Ovary (tissue), 10 donors: ENCODE measurements at regions of chr11 and their contacts with region 1.

Region 1: GRCh38 chr11:63621931-63622782 is 7.9 kb upstream of the PLAAT3 start:
- DNase-seq: peak in 1 of 5 donors; percentile 16
- H3K4me3 ChIP-seq: no peak overlapping the region
- H3K27ac ChIP-seq: no peak overlapping the region
- H3K4me1 ChIP-seq: peaks cover 18% of the 10 kb centered on the region
- H3K27me3 ChIP-seq: no peaks in the 10 kb centered on the region
- CTCF ChIP-seq: no peak
- EP300 ChIP-seq: no peak
- POLR2A ChIP-seq: no peak

Region 2: DNA sequence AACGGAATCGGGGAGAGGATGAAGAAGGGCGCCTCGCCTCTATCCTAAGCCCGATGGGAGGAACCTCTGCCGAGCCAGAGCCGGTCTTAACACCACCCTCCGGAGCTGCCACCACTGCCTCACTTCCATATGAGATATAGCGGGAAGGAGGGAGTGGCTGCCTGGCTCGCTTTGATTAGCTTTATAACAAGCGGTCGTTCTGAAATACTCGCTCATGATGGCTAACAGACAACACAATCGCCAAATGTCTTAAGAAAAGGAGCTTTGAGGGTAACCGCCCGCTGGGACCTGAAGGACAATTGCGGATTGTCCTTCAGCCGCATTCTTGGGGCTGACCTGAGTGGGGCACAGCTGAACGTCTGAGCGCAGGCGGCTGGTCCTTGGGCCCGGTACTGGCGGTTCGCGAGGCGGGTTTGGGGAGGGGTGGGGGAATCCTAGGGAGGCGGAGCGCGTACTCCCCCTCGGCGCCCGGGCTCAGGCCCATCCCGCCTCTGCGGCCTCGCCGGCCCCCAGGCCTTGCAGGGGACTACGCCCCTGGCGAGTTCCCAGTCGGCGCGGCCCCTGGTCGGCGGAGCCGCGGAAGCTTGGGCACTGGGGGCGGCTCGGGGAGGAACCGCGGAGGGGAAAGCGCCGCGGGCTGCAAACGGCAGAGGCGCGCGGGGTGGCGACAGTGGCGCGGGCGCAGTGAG is 131.5 kb before region 1 on chr11 and contains the start of gene PLAAT5:
- intact Hi-C with region 1: loop called in 1 of 4 experiments (anchors 5 kb)
- DNase-seq: peak; percentile 60 to 81 (median 75)
- H3K4me3 ChIP-seq: peak within 1 kb of the TSS; percentile 42
- H3K27ac ChIP-seq: peak within 1 kb of the TSS; percentile 17 to 77
- H3K4me1 ChIP-seq: peaks cover 3% of the 10 kb centered on the region
- H3K27me3 ChIP-seq: no peaks in the 10 kb centered on the region
- CTCF ChIP-seq: no peak
- EP300 ChIP-seq: no peak
- POLR2A ChIP-seq: no peak
- total RNA-seq, gene PLAAT5: 1.7 to 22.2 (median 3.8) TPM

Region 3: GRCh38 chr11:63508009-63508408 is 114.1 kb before region 1 on chr11:
- intact Hi-C with region 1: no loop called
- DNase-seq: no peak
- H3K4me3 ChIP-seq: no peak overlapping the region
- H3K27ac ChIP-seq: no peak overlapping the region
- H3K4me1 ChIP-seq: peaks cover 6% of the 10 kb centered on the region
- H3K27me3 ChIP-seq: no peaks in the 10 kb centered on the region
- CTCF ChIP-seq: no peak
- EP300 ChIP-seq: no peak
- POLR2A ChIP-seq: no peak

Region 4: GRCh38 chr11:63573881-63574855 is 48.0 kb before region 1 on chr11:
- intact Hi-C with region 1: no loop called
- DNase-seq: peak; percentile 43 to 67 (median 59)
- H3K4me3 ChIP-seq: peak overlapping the region; percentile 26
- H3K27ac ChIP-seq: peak overlapping the region; percentile 48 to 63
- H3K4me1 ChIP-seq: peaks cover 15% of the 10 kb centered on the region
- H3K27me3 ChIP-seq: no peaks in the 10 kb centered on the region
- CTCF ChIP-seq: no peak
- EP300 ChIP-seq: no peak
- POLR2A ChIP-seq: no peak

Region 5: GRCh38 chr11:63671322-63672155 is 49.4 kb after region 1 on chr11 and contains the start of gene ATL3:
- intact Hi-C with region 1: no loop called
- DNase-seq: peak; percentile 97 to 99 (median 99)
- H3K4me3 ChIP-seq: peak within 1 kb of the TSS; percentile 69
- H3K27ac ChIP-seq: peak within 1 kb of the TSS; percentile 94
- H3K4me1 ChIP-seq: peaks cover 6% of the 10 kb centered on the region
- H3K27me3 ChIP-seq: no peaks in the 10 kb centered on the region
- CTCF ChIP-seq: peak in 2 of 3 donors; percentile 17 to 29
- EP300 ChIP-seq: no peak
- POLR2A ChIP-seq: peak; percentile 84
- total RNA-seq, gene ATL3: 44.9 to 81.8 (median 55.7) TPM